ENCODE measurements at regions of chr3 and their contacts with region 1.

Region 1: GRCh38 chr3:158532099-158532734 is 38.8 kb upstream of the MLF1 start:
- H3K4me3 Mint-ChIP-seq: no peak overlapping the region
- H3K27ac Mint-ChIP-seq: no peak overlapping the region
- H3K4me1 Mint-ChIP-seq: no peaks in the 10 kb centered on the region
- H3K27me3 Mint-ChIP-seq: no peaks in the 10 kb centered on the region

Region 2: DNA sequence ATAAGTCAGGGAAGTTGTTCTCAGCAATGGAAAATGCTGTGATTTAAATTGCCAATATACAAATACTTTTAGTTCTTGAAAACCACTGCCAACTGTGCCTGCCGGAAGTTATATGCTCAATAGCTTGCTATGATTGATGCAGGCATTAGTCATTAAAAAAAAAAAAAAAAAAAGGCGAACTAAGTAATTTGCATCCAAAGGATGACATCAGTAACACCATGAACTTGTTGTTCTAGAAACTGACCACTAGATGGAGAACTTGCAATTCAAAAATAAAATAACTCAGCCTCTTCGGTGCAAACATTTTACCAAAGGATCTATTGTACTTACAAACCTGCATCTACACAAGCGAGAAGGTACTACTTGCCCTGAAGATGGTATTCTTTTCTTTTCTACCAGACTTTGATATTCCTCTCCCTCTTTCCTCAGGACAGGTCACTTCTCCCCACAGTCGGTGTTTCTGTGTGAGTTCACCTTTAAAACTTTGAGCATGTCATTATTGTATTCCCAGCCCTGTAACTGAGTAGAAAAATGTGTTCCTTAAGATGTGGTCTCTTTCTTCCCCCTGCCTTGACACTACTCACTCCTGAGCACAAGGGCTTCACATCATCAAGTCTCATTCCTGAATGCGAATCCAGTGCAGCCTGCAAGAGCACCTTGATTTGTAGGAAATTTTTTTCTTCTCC is 914.0 kb before region 1 on chr3:
- intact Hi-C with region 1: loop called (anchors 2 kb)
- H3K4me3 Mint-ChIP-seq: no peak overlapping the region
- H3K27ac Mint-ChIP-seq: no peak overlapping the region
- H3K4me1 Mint-ChIP-seq: no peaks in the 10 kb centered on the region
- H3K27me3 Mint-ChIP-seq: peaks cover 7% of the 10 kb centered on the region

Region 3: GRCh38 chr3:157865352-157866000 is 666.7 kb before region 1 on chr3:
- intact Hi-C with region 1: loop called (anchors 1 kb)
- H3K4me3 Mint-ChIP-seq: no peak overlapping the region
- H3K27ac Mint-ChIP-seq: no peak overlapping the region
- H3K4me1 Mint-ChIP-seq: no peaks in the 10 kb centered on the region
- H3K27me3 Mint-ChIP-seq: no peaks in the 10 kb centered on the region

Region 4: DNA sequence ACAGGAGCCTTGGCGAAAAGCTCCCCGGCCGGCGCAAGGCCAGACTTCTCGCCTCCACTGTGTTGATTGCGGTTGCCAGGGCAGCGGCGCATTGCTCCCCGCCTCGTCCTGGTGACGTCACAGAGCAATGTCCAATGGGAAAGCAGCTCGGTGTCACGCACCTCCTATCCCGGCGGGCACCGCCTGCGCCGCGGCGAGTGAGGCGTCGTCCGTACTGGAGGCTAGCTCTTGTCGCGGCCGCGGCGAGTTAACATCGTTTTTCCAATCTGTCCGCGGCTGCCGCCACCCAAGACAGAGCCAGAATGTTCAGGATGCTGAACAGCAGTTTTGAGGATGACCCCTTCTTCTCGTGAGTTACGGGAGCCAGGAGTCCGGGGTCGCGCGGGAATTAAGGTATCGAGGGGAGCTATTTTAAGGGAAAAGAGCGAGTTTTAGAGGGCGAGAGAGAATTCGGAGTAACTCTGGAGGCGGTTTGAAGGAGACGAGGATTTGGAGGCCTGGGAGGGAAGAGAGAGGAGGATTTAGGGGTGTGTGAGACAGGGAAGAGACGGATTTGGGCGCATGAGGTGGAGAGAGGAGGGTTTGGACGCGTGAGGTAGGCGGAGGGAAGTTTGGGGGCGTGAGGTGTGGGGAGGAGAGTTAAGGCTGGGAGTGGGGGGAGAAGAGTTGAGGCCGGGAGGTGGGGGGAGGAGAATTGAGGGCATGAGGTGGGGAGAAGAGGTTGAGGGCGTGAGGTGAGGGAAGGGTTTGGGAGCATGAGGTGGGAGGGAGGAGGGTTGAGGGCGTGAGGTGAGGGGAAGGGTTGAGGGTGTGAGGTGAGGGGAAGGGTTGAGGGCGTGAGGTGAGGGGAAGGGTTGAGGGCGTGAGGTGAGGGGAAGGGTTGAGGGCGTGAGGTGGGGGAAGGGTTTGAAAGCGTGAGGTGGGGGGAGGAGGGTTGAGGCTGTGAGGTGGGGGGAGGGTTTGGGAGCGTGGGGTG is 39.1 kb after region 1 on chr3 and contains the start of gene MLF1:
- intact Hi-C with region 1: no loop called
- H3K4me3 Mint-ChIP-seq: peak within 1 kb of the TSS; percentile 73
- H3K27ac Mint-ChIP-seq: peak within 1 kb of the TSS; percentile 72
- H3K4me1 Mint-ChIP-seq: peaks cover 9% of the 10 kb centered on the region
- H3K27me3 Mint-ChIP-seq: peaks cover 37% of the 10 kb centered on the region

Measured in dendritic cell treated with granulocyte-macrophage colony-stimulating factor and Interleukin-4, amounts not matched to agents 40 ng/mL and 50 ng/mL, for 4 days (primary cell).